Lower leg skin (tissue), 4 donors: ENCODE measurements at regions of chr12 and their contacts with region 1.

Region 1: GRCh38 chr12:54032627-54033100 is at the start of gene HOXC5:
- DNase-seq: peak in 1 of 2 donors; percentile 97
- H3K4me3 ChIP-seq: no peak within 1 kb of the TSS
- CTCF ChIP-seq: peak in 1 of 3 donors; percentile 88
- POLR2A ChIP-seq: no peak
- total RNA-seq, gene HOXC5: 0.58 to 2.2 (median 0.97) TPM in 3 of 4 donors, not detected in the other

Region 2: GRCh38 chr12:54191550-54192022 is 158.9 kb after region 1 on chr12:
- intact Hi-C with region 1: loop called (anchors 5 kb)
- DNase-seq: peak; percentile 86 to 96
- H3K4me3 ChIP-seq: no peak overlapping the region
- CTCF ChIP-seq: peak in 1 of 3 donors; percentile 52
- POLR2A ChIP-seq: no peak